ENCODE measurements at regions of chr15 and their contacts with region 1.

Region 1: DNA sequence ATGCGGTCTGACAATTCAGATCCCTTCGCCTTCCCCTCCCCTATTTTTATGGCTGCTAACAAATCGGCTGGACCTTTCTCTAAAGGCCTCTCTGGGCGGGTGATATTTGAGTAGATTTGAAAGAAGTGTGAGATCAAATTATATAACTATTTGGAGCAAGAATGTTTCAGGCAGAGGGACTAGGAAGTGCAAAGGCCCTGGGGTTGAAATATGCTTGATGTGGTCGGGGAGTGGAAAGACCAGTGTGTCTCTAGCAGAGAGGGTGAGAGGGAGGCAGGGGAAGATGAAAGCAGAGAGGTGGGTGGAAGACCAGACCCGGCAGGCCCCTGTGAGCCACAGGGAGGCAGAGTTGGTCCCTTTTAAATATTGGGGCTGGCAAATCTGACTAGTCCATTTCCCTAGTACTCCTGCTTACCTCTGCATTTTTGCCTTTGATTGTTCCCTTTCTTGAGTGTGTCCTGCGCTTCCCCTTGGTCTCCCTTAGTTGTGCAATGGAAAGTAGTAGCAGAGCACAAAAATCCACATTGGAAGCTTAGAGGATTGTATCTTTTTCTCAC is 32.3 kb downstream of the SLCO3A1 start:
- DNase-seq: no peak
- ATAC-seq: peak in 5 of 8 donors; percentile 37 to 52 (median 40)
- H3K4me3 ChIP-seq: no peak overlapping the region
- H3K27ac ChIP-seq: no peak overlapping the region
- H3K4me1 ChIP-seq: peaks cover 3 to 87% (median 52%) of the 10 kb centered on the region in 9 donors
- H3K27me3 ChIP-seq: no peaks in the 10 kb centered on the region
- CTCF ChIP-seq: peak in 5 of 9 donors; percentile 23 to 51 (median 40)

Region 2: DNA sequence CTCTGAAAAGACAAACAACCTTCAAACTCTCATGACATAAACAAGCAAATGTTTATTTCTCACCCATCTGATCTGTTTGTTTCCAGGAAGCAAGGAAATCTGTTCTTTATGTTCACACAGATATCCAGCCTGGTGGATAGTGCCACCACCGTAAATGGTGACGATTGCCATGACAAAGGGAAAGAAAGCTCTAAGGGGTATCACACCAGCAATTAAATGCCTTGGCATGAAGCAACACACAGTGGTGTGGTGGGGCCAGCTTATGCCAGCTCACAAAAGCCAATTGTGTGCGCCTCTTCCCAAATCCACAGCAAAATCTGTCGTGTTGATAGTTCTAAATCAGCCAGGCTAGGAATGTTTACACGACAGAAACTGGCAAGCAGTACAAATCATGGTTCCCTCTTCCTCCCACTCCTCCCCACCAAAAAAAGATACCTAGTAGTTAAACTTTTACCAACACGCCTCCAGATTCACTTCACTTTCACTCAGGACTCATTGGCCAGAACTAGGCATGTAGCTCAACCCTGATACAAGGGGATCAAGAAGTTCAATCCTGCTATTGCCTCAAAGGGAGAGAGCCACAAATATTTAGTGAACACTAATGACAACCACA is 221.5 kb before region 1 on chr15:
- intact Hi-C with region 1: no loop called
- DNase-seq: no peak
- ATAC-seq: no peak
- H3K4me3 ChIP-seq: no peak overlapping the region
- H3K27ac ChIP-seq: no peak overlapping the region
- H3K4me1 ChIP-seq: no peaks in the 10 kb centered on the region
- H3K27me3 ChIP-seq: peaks cover 0 to 11% (median 0%) of the 10 kb centered on the region in 7 donors
- CTCF ChIP-seq: no peak

Region 3: DNA sequence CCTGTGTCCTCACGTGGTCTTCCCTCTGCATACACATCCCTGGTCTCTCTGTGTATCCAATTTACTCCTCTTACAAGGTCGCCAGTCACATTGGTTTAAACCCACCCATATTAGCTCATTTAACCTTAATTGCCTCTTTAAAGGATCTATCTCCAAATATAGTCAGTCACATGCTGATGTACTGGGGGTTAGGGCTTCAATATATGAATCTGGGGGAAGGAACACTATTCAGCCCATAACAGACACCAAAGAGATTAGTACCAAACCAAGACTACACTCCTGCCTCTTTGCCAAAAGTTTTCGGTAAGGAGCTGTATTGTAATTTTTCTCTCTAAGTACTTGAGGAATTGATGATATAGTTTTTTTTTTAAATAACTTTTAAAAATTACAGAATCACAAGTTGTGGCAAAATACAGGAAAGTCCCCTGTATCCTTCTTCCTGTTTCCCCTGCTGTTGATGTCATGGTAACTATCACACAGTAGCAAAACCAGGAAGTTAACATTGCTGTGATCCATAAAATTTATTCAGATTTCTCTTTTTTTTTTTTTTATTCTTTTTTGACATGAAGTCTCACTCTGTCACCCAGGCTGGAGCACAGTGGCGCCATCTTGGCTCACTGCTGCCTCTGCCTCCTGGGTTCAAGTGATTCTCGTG is 35.5 kb after region 1 on chr15:
- intact Hi-C with region 1: loop called in 2 of 10 experiments (anchors 5 kb)
- DNase-seq: no peak
- ATAC-seq: peak in 5 of 8 donors; percentile 21 to 67 (median 34)
- H3K4me3 ChIP-seq: peak overlapping the region in 2 of 10 donors; percentile 9 to 11
- H3K27ac ChIP-seq: peak overlapping the region in 9 of 10 donors; percentile 40 to 82 (median 57)
- H3K4me1 ChIP-seq: peaks cover 27 to 91% (median 85%) of the 10 kb centered on the region in 9 donors
- H3K27me3 ChIP-seq: no peaks in the 10 kb centered on the region
- CTCF ChIP-seq: no peak

Region 4: DNA sequence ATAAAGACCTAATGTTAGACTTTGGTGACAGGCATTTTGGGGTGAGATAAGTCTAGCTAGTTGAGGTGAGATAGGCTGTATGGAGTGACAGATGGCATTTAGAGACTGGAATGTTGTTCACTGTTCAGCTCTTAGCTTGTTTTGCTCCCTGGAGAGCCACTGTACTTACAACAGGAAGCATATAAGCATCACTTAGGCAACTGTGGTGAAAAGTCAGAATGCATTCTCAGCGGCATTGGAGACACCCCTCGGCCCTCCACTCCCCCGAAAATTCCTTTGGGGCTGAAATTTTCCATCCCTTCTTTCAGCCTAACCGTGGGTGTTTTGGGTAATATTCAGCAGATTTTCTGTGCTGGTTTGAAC is 41.1 kb after region 1 on chr15:
- intact Hi-C with region 1: loop called in 2 of 10 experiments (anchors 5 kb)
- DNase-seq: no peak
- ATAC-seq: peak; percentile 29 to 52 (median 50)
- H3K4me3 ChIP-seq: no peak overlapping the region
- H3K27ac ChIP-seq: peak overlapping the region in 8 of 10 donors; percentile 17 to 69 (median 40)
- H3K4me1 ChIP-seq: peaks cover 17 to 90% (median 79%) of the 10 kb centered on the region in 9 donors
- H3K27me3 ChIP-seq: no peaks in the 10 kb centered on the region
- CTCF ChIP-seq: no peak

Region 5: GRCh38 chr15:91942676-91943576 is 57.1 kb after region 1 on chr15:
- intact Hi-C with region 1: no loop called
- DNase-seq: peak; percentile 63 to 88
- ATAC-seq: peak; percentile 75 to 92 (median 86)
- H3K4me3 ChIP-seq: peak overlapping the region in 7 of 10 donors; percentile 6 to 35 (median 17)
- H3K27ac ChIP-seq: peak overlapping the region in 9 of 10 donors; percentile 29 to 82 (median 68)
- H3K4me1 ChIP-seq: peaks cover 37 to 98% (median 93%) of the 10 kb centered on the region in 9 donors
- H3K27me3 ChIP-seq: no peaks in the 10 kb centered on the region
- CTCF ChIP-seq: no peak